Activated naive CD4-positive, alpha-beta T cell treated with anti-CD3 and anti-CD28 coated beads, Interleukin-2, amount 10 ng/mL, durations not matched to agents 7 days and 5 days (primary cell): ENCODE measurements at regions of chr1 and their contacts with region 1.

Region 1: DNA sequence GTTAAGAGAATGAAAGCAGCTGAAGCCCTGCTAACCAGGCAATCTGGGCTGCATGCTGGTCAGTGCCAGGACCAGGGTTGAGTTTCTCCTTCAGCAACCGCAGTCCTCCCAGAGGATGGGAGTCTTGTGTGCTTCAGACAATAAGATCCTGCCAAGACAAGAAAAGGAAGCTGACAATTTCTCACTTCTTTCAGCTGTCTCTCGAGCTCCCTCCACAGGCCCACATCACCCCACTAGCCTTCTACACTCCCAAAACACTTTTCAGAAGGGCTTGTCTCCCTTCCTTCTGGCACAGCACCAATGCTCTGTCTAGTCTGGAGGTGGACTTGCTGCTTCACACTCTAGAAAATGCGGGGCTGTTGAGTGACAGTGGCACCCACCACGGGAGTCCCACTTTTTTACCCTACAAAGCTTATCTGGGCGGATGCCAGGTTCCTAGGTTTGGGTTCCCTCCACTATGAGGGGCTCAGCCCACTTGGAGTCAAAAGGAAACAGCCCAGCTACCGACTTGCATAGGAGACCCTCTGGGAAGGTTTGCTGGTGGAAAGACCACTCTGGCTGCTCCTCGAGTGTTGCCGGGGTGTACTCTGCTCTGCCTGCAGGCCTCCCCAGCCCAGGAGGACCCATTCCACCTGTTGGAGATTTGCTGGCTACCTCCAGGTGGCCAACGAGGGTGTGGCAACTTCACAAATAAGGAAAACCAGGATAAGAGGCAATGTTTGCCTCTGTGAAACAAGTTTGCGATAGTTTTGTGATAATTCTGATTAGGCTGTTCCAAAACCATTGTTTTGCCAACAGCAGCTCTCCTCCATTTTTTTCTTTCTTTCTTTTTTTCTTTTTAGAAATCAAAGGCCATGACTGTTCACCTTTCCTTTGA is 68.9 kb downstream of the TENT5C start:
- DNase-seq: peak; percentile 76
- H3K4me3 Mint-ChIP-seq: no peak overlapping the region
- H3K27ac Mint-ChIP-seq: no peak overlapping the region
- H3K4me1 Mint-ChIP-seq: peaks cover 33% of the 10 kb centered on the region
- H3K27me3 Mint-ChIP-seq: peaks cover 53% of the 10 kb centered on the region

Region 2: GRCh38 chr1:117512743-117513321 is 161.9 kb before region 1 on chr1:
- CTCF ChIA-PET with region 1: interaction called, 23 read pairs
- DNase-seq: no peak
- H3K4me3 Mint-ChIP-seq: no peak overlapping the region
- H3K27ac Mint-ChIP-seq: no peak overlapping the region
- H3K4me1 Mint-ChIP-seq: no peaks in the 10 kb centered on the region
- H3K27me3 Mint-ChIP-seq: no peaks in the 10 kb centered on the region

Region 3: GRCh38 chr1:117541003-117541402 is 133.8 kb before region 1 on chr1:
- CTCF ChIA-PET with region 1: interaction called, 160 read pairs
- DNase-seq: no peak
- H3K4me3 Mint-ChIP-seq: no peak overlapping the region
- H3K27ac Mint-ChIP-seq: peak overlapping the region; percentile 13
- H3K4me1 Mint-ChIP-seq: peaks cover 43% of the 10 kb centered on the region
- H3K27me3 Mint-ChIP-seq: peaks cover 13% of the 10 kb centered on the region

Region 4: DNA sequence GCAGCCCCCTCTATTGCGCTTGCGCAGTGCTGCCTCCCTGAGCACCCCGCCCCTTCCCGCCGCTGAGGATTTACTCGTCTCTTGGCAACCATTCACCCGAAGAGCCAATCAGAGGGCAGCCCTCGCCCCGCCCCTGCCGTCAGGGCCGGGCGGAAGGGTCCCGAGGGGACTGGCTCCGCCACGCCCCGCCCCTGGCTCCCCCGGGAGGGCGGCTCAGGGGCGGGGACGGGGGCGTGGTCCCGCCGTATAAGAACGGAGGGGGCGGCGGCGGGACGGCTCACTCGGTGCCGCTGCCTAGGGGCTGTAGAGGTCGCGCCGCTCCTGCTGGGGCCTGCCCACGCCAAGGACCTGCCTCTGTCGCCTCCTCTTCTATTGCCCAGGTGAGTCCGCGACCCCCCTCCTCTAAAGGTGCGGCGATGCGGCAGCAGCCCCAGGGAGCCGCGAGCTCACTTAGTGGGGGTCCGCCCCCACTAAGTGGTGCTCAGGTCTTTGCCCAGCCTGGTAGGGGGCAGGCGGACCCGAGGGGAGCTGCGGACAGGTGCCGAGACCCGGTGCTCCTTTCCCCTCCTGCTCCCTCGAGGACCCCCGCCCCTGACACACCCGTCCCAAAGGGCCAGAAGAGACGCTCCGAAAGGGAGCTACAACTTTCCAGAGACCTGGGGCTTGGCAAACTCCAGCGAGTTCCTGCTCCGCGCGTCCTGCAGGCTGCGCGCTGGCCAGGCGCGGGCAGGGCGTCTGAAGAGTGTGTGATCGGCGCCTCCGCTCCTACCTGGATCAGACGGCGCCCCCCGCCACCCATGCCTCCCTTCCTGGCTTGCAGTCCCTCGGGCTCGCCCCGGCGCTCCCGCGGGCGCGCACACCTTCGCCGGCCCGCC is 68.7 kb before region 1 on chr1 and contains the start of gene TENT5C:
- CTCF ChIA-PET with region 1: interaction called, 11 read pairs
- DNase-seq: peak; percentile 99
- H3K4me3 Mint-ChIP-seq: peak within 1 kb of the TSS; percentile 97
- H3K27ac Mint-ChIP-seq: peak within 1 kb of the TSS; percentile 95
- H3K4me1 Mint-ChIP-seq: peaks cover 50% of the 10 kb centered on the region
- H3K27me3 Mint-ChIP-seq: peaks cover 20% of the 10 kb centered on the region

Region 5: GRCh38 chr1:117654493-117655219 is 20.1 kb before region 1 on chr1:
- CTCF ChIA-PET with region 1: interaction called, 11 read pairs
- DNase-seq: peak; percentile 41
- H3K4me3 Mint-ChIP-seq: peak overlapping the region; percentile 31
- H3K27ac Mint-ChIP-seq: peak overlapping the region; percentile 87
- H3K4me1 Mint-ChIP-seq: peaks cover 87% of the 10 kb centered on the region
- H3K27me3 Mint-ChIP-seq: peaks cover 28% of the 10 kb centered on the region